Head of caudate nucleus (tissue), 42 donors: ENCODE measurements at regions of chr6 and their contacts with region 1.

Region 1: GRCh38 chr6:109009962-109010704 is 84.5 kb downstream of the SESN1 start:
- DNase-seq: no peak

Region 2: DNA sequence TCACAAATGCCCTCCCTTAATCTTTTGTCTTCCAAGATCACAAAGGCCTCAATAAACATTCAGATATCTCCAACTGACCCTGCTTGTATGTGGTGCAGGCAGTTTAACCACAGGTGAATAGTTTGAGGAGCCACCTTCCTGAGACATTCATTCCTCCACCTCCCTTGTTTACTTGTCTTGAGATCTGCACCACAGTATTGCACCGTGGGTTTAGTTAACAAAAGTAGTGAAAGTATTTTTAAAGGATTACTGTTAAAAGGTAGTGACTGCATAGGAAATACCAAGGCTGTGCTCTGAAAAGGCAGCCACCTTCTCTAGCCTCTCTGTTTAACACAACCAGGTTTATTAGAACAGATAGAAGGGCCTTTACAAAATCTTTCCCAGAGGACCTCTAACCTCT is 38.0 kb after region 1 on chr6:
- intact Hi-C with region 1: no loop called
- DNase-seq: no peak

Region 3: GRCh38 chr6:109059571-109060021 is 49.5 kb after region 1 on chr6:
- intact Hi-C with region 1: loop called (anchors 10 kb)
- DNase-seq: peak in 6 of 42 donors; percentile 12 to 49 (median 24)

Region 4: DNA sequence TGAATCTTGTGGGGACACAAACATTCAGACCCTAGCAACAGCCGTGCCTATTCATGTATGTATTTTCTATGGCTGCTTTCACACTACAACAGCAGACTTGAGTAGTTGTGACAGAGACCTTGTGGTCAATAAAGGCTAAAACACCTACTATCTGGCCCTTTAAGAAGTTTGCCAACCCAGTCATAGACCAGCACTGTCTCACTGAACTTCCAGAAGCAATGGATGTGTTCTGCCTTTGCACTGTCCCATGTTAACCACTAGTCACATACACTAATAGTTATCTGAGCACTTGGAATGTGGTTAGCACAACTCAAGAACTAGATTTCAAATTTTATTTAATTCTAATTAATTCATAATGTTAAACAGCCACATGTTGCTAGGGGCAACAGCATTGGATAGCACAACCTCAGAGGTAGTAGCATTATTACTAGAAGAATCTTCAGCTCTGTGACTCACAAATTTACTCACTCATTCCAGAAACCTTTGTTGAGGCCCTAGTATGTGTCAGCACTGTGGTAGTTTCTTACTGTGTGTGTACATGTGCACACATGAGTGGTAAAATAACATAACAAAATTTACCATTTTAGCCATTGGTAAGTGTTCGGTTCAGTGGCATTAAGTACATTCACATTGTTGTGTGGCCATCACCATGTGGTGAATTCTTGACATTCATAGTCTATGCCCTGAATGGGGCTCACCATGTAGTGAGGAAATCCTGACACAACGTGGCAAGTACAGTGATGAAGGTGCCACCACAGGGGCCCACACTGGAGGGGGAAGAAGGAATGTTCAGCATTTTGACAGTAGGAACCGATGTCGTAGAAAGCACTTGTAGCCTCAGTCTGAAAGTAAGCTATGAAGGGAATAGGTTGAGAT is 192.5 kb after region 1 on chr6:
- intact Hi-C with region 1: no loop called
- DNase-seq: no peak